OCI-LY7 (cell line): ENCODE measurements at regions of chr14 and their contacts with region 1.

Region 1: GRCh38 chr14:24135834-24136542 is at the start of gene PSME1:
- DNase-seq: peak; percentile 93
- H3K4me3 ChIP-seq: peak within 1 kb of the TSS; percentile 98
- H3K27ac ChIP-seq: peak within 1 kb of the TSS; percentile 46
- H3K4me1 ChIP-seq: peaks cover 40% of the 10 kb centered on the region
- CTCF ChIP-seq: no peak
- total RNA-seq, gene PSME1: 187 and 213 TPM in 2 replicates

Region 2: DNA sequence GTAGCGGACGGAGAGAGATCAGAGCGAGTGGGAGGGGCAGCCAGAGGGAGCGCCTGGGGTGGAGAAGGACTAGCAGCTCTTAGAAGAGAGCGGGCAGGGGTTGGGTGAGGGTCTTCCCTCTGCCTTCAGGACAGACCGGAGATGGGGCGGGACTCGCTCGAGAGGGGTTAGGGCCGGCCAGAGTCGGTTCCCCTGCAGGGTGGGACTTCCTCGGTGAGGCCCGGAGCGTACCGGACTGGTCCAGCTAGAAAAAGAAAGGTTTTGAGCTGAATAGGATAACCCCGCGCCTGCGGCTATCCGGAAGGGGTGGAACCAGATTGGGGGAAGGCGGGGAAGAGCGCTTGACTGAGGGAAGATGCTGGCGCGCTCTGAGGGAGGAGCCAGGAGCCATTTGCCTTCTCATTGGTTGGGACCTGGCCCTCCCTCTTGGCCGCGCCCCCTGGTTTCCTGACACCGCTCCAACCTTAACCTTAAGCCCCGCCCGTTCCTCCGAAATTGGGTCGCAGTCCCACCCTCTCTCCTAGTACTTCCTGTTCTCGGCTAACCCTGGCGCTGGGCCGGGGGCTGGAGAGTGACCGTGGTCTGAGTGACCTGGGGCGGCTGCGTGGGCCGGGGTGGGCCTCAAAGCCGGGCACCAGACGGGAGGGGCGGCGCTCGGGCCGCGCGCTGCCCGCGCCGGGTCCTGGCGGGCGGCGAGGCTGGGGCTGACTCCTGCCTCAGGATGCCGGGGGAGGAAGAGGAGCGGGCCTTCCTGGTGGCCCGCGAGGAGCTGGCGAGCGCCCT is 11.2 kb after region 1 on chr14 and contains the start of gene RNF31:
- CTCF ChIA-PET with region 1: no interaction called
- POLR2A ChIA-PET with region 1: interaction called, 31 read pairs
- intact Hi-C with region 1: no loop called
- DNase-seq: peak; percentile 99
- H3K4me3 ChIP-seq: peak within 1 kb of the TSS; percentile 94
- H3K27ac ChIP-seq: peak within 1 kb of the TSS; percentile 82
- H3K4me1 ChIP-seq: peaks cover 20% of the 10 kb centered on the region
- CTCF ChIP-seq: no peak
- total RNA-seq, gene RNF31: 37.8 and 66.1 TPM in 2 replicates

Region 3: DNA sequence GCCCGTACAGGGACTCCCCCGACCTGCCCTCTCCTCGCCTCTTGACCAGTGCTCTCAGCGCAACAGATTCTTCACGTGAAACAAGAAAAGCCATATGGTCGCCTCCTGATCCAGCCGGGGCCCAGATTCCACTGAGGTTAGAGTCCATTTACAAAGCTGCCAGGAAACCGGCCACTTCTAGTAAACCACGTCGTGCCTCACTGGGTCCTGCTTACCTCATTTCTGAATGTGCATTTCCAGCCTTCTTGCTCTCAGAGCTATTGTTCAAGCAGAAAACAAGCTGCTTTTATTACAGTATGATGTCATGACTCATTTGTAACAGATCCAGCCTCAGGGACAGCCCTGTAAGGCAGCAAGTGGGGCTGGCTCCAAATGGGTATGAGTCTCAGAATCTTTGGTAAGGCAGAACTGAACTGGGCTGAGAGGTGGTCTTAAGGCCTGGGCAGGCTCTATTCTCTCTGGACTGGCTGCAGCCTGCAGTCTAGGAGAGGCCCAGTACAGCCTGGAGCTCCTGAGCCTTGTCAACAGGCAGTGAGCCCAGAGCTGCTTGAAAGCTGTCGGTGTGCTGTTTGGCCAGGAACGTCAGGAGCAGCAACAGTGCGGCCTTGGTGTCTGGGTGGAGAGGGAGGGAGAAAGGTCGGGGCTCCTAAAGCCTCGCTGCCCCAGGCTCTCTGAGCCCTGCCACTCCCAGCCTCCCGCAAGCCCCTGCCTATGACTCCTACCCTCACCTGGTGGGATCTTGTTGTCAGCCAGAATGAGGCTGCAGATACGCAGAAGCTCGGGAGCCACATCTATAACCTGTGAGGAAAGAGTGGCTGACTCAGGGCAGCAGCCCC is 44.2 kb after region 1 on chr14:
- CTCF ChIA-PET with region 1: no interaction called
- POLR2A ChIA-PET with region 1: no interaction called
- intact Hi-C with region 1: no loop called
- DNase-seq: no peak
- H3K4me3 ChIP-seq: no peak overlapping the region
- H3K27ac ChIP-seq: no peak overlapping the region
- H3K4me1 ChIP-seq: no peaks in the 10 kb centered on the region
- CTCF ChIP-seq: no peak